AG04449 (cell line): ENCODE measurements at regions of chr20 and their contacts with region 1.

Region 1: GRCh38 chr20:57596998-57597939 is 23.0 kb downstream of the ZBP1 start:
- DNase-seq: no peak
- H3K4me3 ChIP-seq: no peak overlapping the region
- CTCF ChIP-seq: peak; percentile 90

Region 2: DNA sequence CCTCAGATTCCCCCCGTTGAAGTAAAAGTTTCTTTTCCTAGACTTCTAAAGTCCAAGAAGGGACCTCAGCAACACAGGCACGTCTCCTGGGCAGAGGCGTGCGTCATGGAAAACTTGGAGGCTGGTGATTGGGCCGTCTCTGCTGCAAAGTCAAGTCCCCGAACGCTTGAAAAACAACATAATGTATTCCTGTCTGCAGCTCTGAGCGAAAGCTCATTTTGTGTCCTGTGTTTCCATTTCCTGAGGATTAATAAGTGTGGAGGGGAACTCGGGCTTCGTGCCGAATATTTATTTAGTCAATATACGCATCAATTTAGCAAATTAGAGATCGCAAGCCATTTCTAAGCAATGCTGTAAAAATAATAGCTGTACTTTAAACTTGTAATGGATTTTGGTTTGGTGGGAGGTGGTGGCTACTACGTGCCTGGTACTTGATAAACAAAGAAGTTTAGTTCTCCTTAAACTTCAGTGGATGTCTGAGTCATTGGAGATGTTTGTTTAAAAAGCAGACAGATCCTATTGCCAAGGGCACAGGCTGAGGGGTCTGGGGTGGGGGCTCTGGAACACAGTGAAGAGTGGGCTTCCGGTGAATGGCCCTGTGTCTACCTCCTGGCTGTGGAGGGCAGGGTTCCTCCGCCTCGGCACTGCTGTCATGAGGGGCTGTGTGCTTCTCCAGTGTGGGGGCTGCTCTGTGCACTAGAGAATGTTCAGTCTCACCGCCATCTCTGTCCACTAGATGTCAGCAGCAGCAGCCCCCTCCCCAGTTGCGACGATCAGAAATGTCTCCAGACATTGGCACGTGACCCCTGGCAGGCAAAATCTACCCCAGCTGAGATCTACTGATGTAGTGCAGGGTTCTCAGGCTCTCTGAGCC is 14.6 kb before region 1 on chr20:
- CTCF ChIA-PET with region 1: interaction called, 56 read pairs
- POLR2A ChIA-PET with region 1: no interaction called
- DNase-seq: no peak
- H3K4me3 ChIP-seq: no peak overlapping the region
- CTCF ChIP-seq: peak; percentile 7

Region 3: DNA sequence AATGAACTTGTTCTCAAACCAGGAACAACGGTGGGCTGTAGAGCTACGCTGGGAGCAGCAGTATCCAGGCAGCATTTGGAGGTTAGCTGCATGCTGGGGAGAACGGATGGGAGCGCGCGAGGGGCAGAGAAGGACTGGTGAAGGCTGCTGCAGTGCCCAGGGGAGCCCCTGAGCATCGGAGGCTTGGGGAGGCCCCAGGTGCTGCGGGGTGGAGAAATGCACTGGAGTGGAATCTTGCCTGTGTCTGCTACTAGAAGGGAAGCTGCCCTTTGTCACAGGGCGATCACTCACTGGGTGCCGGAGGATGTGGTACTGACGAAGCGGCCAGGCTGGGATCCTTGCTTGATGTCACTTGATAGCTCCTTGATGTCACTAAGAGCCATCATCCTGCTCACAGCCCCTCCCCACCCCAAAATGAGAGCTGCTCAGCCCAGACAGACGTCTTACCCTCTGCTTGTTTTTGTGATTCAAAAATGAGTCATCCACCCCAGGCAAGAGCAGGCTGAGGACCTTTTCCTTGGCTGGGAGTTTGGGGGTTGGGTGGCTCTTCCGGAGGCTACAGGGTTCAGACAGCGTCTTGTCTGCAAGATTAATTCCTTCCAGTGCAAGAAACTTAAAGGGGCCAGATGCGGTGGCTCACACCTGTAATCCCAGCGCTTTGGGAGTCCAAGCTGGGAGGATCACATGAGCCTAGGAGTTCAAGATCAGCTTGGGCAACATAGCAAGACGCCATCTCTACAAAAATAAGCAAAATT is 175.2 kb after region 1 on chr20:
- CTCF ChIA-PET with region 1: no interaction called
- POLR2A ChIA-PET with region 1: no interaction called
- DNase-seq: no peak
- H3K4me3 ChIP-seq: no peak overlapping the region
- CTCF ChIP-seq: no peak

Region 4: DNA sequence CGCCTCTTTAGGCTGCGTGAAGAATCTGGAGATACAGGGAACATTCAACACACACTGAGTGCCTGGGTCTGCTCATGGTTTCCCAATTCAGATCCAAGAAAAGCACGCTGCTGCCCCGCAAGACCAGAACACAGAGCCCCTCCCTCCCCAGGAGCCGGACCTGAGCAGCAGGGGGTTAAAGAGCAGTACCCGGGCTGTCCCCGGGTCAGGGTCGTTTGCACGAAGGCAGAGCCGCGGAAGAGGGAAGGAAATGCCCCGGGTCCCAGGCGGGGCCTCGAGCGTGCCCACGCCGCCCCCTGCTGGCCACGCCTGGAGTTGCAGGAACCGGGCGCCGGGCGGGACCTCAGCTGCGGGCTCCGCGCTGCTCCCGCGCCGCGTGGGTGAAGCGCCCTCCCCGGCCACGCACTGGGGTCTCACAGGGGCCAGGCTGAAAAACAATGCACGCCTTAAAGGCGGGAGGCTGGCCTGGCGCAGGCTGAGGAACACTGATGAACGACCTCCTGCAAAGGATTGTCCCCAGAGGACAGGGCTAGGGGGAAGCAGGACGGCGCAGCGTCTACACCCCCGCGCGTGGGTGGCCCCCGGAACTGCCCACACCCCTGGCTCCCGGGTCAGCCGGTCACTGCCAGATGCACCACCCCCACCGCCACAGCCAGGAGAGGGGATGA is 582.3 kb after region 1 on chr20:
- CTCF ChIA-PET with region 1: interaction called, 63 read pairs
- POLR2A ChIA-PET with region 1: no interaction called
- DNase-seq: no peak
- H3K4me3 ChIP-seq: peak overlapping the region; percentile 43
- CTCF ChIP-seq: peak; percentile 92

Region 5: DNA sequence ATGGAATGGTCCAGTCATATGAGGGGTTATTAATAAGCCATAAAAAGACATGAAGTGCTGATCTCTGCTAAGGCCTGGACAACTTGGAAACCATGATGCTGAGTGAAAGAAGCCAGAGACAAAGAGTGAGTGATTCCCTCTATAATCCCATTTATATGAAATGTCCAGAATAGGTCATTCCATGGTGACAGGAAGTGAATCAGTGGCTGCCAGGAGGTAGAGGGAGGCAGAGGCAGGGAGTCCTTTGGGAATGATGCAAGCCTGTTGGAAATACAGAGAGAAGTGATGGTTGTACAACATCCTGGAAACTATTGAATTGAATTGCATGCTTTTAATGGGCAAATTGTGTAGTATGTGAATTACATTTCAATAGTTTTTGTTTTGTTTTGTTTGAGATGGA is 604.8 kb after region 1 on chr20:
- CTCF ChIA-PET with region 1: interaction called, 270 read pairs
- POLR2A ChIA-PET with region 1: no interaction called
- DNase-seq: no peak
- H3K4me3 ChIP-seq: no peak overlapping the region
- CTCF ChIP-seq: no peak